Ovary (tissue), 10 donors: ENCODE measurements at regions of chr2 and their contacts with region 1.

Region 1: GRCh38 chr2:102172745-102173144 is 14.1 kb upstream of the IL1RL2 start:
- DNase-seq: no peak
- H3K4me3 ChIP-seq: no peak overlapping the region
- H3K27ac ChIP-seq: no peak overlapping the region
- H3K4me1 ChIP-seq: no peaks in the 10 kb centered on the region
- H3K27me3 ChIP-seq: no peaks in the 10 kb centered on the region
- CTCF ChIP-seq: no peak
- EP300 ChIP-seq: no peak
- POLR2A ChIP-seq: no peak

Region 2: GRCh38 chr2:102126651-102127050 is 46.1 kb before region 1 on chr2:
- intact Hi-C with region 1: no loop called
- DNase-seq: no peak
- H3K4me3 ChIP-seq: no peak overlapping the region
- H3K27ac ChIP-seq: no peak overlapping the region
- H3K4me1 ChIP-seq: no peaks in the 10 kb centered on the region
- H3K27me3 ChIP-seq: no peaks in the 10 kb centered on the region
- CTCF ChIP-seq: no peak
- EP300 ChIP-seq: no peak
- POLR2A ChIP-seq: no peak

Region 3: GRCh38 chr2:102147935-102148334 is 24.8 kb before region 1 on chr2:
- intact Hi-C with region 1: loop called in 1 of 4 experiments (anchors 2 kb)
- DNase-seq: no peak
- H3K4me3 ChIP-seq: no peak overlapping the region
- H3K27ac ChIP-seq: no peak overlapping the region
- H3K4me1 ChIP-seq: no peaks in the 10 kb centered on the region
- H3K27me3 ChIP-seq: no peaks in the 10 kb centered on the region
- CTCF ChIP-seq: no peak
- EP300 ChIP-seq: no peak
- POLR2A ChIP-seq: no peak